Activated T-helper 1 cell treated with anti-CD3 and anti-CD28 coated beads, Interleukin-12 subunit alpha, Interleukin-12 subunit beta, Interleukin-2, Interleukin-4 antibody, amounts not matched to agents 30 ng/mL and 10 ng/mL and 1 ng/mL, durations not matched to agents 14 hours and 24 hours and 36 hours (primary cell): ENCODE measurements at regions of chr4 and their contacts with region 1.

Region 1: DNA sequence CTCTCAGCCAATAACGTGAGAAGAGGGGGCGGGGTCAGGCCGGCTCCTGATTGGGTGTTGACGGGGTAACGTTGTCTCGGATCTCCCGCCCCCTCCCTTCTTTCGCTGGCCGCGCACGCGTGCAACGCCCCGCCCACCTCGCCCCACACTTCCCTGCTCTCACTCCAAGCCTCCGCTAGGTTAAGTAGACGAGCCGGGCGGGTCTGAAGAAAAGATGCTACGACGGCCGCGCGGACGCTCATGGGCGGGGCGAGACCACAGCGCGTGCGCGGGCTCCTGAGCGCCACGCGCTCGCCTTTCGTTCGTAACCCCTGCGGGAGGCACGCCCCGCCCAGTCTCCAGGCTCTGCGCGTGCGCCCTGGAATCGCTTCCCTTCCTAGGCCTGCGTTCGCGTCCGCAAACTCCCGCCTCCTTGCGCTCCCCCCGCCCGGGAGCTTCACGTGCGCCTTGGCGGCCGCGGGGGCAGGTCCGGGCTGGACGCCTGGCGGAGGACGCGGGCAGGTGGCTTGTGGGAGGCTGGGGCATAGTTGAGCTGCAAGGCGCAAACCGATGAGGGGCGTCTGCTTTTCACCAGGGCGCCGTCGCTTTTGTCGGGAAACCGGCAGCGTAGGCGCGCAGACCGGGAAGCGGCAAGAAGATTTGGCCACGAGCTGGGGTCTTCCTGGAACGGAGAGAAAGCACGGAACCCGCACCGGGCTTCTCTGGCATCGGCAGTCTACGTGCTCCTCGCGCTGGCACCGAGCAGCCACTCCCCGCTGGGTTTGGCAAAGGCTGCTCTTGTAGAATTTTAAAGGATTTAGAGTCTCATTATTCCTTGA is 467 bp upstream of the PGRMC2 start:
- DNase-seq: peak; percentile 96
- H3K4me3 Mint-ChIP-seq: peak overlapping the region; percentile 96
- H3K27ac Mint-ChIP-seq: peak overlapping the region; percentile 93
- H3K4me1 Mint-ChIP-seq: peaks cover 31% of the 10 kb centered on the region
- H3K27me3 Mint-ChIP-seq: no peaks in the 10 kb centered on the region

Region 2: DNA sequence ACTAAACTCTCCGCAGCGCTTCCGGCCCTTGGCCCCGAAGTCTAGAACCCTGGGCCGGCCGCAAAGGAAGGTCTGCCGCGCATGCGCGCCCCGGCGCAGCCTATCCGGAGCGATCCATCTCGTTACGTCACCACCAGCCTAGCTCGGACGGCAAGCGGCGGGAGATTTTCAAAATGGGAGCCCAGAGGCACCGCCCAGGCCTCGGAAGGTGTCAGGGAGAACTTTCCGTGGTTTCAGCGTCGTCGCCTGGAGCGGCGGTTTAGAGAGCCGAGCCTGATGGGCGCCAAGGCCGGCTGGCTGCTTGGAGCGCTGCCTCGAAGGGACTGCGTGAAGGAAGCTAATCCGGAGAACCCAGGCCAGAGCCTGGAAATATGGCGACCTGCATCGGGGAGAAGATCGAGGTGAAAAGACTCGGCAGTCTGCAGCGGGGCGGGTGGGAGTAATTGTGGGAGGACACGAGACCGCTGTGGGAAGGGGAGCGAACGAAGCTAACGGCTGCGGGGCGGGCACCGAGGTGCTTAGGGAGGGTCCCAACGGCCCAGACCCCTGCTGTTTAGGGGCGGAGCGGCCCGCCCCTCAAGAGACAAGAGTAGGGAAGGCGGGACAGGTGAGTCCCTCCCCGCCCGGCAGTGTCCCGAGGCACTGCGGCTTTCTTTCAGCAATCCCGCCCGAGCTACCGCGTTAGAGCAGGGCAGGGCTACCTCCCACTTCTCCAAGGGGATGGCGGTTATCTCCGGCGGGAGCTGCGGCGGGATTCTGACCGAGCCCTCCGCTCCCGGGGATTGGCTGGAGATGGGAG is 407.1 kb before region 1 on chr4 and contains the start of gene PLK4:
- intact Hi-C with region 1: loop called (anchors 1 kb)
- DNase-seq: peak; percentile 96
- H3K4me3 Mint-ChIP-seq: peak within 1 kb of the TSS; percentile 91
- H3K27ac Mint-ChIP-seq: peak within 1 kb of the TSS; percentile 91
- H3K4me1 Mint-ChIP-seq: peaks cover 31% of the 10 kb centered on the region
- H3K27me3 Mint-ChIP-seq: no peaks in the 10 kb centered on the region
- total RNA-seq, gene PLK4: 40.7 and 41.2 TPM in 2 replicates

Region 3: GRCh38 chr4:128060699-128061565 is 227.1 kb before region 1 on chr4 and contains the start of gene LARP1B:
- intact Hi-C with region 1: loop called (anchors 1 kb)
- DNase-seq: peak; percentile 93
- H3K4me3 Mint-ChIP-seq: peak within 1 kb of the TSS; percentile 88
- H3K27ac Mint-ChIP-seq: peak within 1 kb of the TSS; percentile 95
- H3K4me1 Mint-ChIP-seq: peaks cover 6% of the 10 kb centered on the region
- H3K27me3 Mint-ChIP-seq: no peaks in the 10 kb centered on the region
- total RNA-seq, gene LARP1B: 33.3 and 34.5 TPM in 2 replicates

Region 4: GRCh38 chr4:128354205-128354821 is 66.2 kb after region 1 on chr4:
- intact Hi-C with region 1: no loop called
- DNase-seq: no peak
- H3K4me3 Mint-ChIP-seq: no peak overlapping the region
- H3K27ac Mint-ChIP-seq: no peak overlapping the region
- H3K4me1 Mint-ChIP-seq: no peaks in the 10 kb centered on the region
- H3K27me3 Mint-ChIP-seq: no peaks in the 10 kb centered on the region

Region 5: DNA sequence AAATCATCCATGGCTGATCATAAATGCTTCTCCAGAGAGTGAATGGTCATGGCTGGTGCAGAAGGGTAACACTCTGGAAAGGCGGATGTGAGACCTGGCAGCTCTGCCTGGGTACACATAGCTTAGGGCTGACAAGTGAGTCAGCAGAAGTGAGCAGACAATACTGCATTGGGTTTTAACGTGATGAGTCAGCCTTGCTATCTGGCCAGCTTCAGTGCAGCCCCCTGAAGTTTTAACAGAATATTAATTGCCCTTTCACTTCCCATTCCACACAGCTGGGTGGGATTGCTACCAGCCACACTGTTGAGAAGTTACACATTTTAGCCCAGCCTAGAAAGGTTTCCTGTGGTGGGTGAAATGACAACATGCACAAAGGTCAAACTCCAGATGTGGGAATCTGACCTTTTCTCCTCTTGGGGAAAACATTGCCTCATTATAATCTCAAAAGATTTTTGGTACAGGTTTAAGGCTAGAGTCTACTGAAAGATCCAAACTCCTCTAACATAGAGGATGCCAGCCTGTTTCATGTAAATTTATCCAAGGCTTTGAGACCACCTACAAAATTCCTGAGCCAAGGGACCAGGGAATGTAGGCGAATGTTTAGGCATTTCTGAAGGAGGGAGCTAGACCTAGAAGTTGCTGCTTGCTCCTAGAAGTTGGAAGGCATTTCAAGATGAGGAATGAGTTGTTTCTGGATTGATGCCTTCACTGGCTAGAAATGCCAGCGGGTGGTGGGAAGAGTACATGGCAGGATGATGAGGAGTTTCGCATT is 229.8 kb after region 1 on chr4:
- intact Hi-C with region 1: loop called (anchors 10 kb)
- DNase-seq: no peak
- H3K4me3 Mint-ChIP-seq: no peak overlapping the region
- H3K27ac Mint-ChIP-seq: no peak overlapping the region
- H3K4me1 Mint-ChIP-seq: peaks cover 25% of the 10 kb centered on the region
- H3K27me3 Mint-ChIP-seq: peaks cover 5% of the 10 kb centered on the region

Region 6: GRCh38 chr4:128863312-128864075 is 575.4 kb after region 1 on chr4:
- intact Hi-C with region 1: loop called (anchors 2 kb)
- DNase-seq: peak; percentile 34
- H3K4me3 Mint-ChIP-seq: peak overlapping the region; percentile 27
- H3K27ac Mint-ChIP-seq: peak overlapping the region; percentile 87
- H3K4me1 Mint-ChIP-seq: peaks cover 53% of the 10 kb centered on the region
- H3K27me3 Mint-ChIP-seq: no peaks in the 10 kb centered on the region